GM18951 (cell line): ENCODE measurements at regions of chr1 and their contacts with region 1.

Region 1: GRCh38 chr1:41573785-41574713 is 89.6 kb upstream of the EDN2 start:
- POLR2A ChIP-seq: no peak

Region 2: GRCh38 chr1:41484372-41485241 is 89.4 kb before region 1 on chr1 and contains the start of gene EDN2:
- in situ Hi-C with region 1: no loop called
- POLR2A ChIP-seq: no peak

Region 3: DNA sequence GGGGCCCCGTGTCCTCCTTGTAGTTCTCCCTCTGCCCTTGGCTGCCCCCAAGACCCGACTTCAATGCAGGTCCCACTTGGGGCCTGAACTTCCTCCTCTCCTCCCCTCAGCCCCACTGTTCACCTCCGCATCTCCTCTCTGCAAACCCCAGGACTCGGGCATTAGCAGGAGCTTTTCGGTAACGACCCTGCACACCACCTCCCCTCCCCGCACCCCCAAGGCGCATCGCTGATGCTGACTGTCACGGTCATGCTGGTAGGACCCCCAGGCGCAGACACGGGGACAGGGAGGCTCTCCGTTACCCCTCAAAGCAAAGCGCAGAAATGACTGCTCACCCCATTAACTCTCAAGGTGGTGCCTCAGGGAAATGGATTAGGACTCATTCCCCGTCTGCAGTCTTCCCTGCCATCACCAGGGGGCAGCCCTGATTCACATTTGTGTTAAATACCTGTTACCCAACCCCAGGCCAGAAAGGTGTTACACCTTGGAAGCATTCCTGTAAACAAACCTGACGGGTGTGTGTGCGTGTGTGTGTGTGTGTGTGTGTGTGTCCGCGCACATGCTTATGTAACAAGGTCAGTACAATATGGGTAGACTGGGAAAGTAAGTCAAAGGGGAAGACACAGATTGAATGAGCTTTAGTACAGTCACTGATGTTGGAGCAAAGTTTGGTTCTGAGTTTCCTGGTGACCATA is 572.7 kb after region 1 on chr1:
- in situ Hi-C with region 1: loop called (anchors 25 kb)
- POLR2A ChIP-seq: no peak